IMR-90 (cell line): ENCODE measurements at regions of chr2 and their contacts with region 1.

Region 1: GRCh38 chr2:241257417-241258032 is 57.9 kb downstream of the HDLBP start:
- DNase-seq: no peak
- ATAC-seq: no peak
- H3K4me3 ChIP-seq: no peak overlapping the region
- H3K27ac ChIP-seq: no peak overlapping the region
- H3K4me1 ChIP-seq: no peaks in the 10 kb centered on the region
- H3K27me3 ChIP-seq: no peaks in the 10 kb centered on the region
- CTCF ChIP-seq: peak; percentile 24; the same call in 1 of the 2 replicates
- POLR2A ChIP-seq: no peak
- RAD21 ChIP-seq: no peak

Region 2: DNA sequence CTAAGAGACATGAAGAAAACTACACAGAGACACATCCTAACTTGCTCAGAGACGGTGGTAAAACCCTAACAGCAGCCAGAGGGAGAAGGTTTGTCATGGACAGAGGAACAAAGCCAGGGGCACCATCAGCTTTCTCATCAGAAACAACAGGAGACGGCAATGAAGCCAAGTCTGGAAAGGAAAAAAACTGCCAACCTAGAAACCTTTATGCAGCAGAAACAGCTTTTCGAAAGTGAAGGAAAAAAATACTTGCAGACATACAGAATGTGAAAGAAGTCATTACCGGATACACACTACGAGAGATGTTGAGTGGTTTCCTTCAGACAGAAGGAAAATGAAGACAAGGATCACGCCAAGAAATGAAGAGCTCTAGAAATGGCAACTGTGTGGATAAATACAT is 13.2 kb before region 1 on chr2:
- CTCF ChIA-PET with region 1: no interaction called
- POLR2A ChIA-PET with region 1: no interaction called
- dilution Hi-C with region 1: no loop called
- in situ Hi-C with region 1: no loop called
- intact Hi-C with region 1: loop called (anchors 2 kb)
- DNase-seq: no peak
- ATAC-seq: no peak
- H3K4me3 ChIP-seq: no peak overlapping the region
- H3K27ac ChIP-seq: no peak overlapping the region
- H3K4me1 ChIP-seq: peaks cover 1% of the 10 kb centered on the region; the same call in 1 of the 2 replicates
- H3K27me3 ChIP-seq: no peaks in the 10 kb centered on the region
- CTCF ChIP-seq: no peak
- POLR2A ChIP-seq: no peak
- RAD21 ChIP-seq: no peak

Region 3: DNA sequence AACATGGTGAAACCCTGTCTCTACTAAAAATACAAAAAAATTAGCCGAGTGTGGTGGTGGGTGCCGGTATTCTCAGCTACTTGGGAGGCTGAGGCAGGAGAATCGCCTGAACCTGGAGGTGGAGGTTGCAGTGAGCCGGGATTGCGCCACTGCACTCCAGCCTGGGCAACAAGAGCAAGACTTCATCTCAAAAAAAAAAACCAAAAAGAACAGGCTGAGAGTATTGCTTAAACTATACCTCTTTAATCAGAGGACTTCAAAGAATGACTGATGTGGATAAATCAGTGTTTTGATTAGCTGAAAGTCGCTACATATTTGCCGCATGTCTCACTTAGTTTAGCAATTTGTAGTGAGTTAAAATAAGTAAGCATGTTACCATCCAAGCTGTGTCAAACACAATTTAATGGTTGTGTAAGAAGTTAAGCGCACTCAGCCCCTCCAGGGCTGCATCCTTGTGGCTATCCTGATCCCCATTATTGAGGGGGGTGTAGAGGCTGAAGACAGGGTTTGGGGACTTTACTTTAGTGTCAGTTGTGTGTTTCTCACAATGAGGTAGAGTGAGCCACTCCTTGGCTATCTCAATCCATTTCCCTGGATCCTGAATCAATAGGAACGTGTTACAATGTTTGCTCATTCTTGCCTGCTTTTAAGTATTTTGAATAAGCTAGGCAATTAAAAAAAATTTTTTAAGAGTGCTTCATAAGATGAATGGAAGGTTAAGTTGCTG is 87.6 kb after region 1 on chr2:
- CTCF ChIA-PET with region 1: no interaction called
- POLR2A ChIA-PET with region 1: no interaction called
- dilution Hi-C with region 1: no loop called
- in situ Hi-C with region 1: loop called (anchors 5 kb)
- intact Hi-C with region 1: loop called (anchors 5 kb)
- DNase-seq: peak; percentile 51
- ATAC-seq: peak; percentile 61
- H3K4me3 ChIP-seq: no peak overlapping the region
- H3K27ac ChIP-seq: no peak overlapping the region
- H3K4me1 ChIP-seq: peaks cover 7% of the 10 kb centered on the region
- H3K27me3 ChIP-seq: no peaks in the 10 kb centered on the region
- CTCF ChIP-seq: no peak
- POLR2A ChIP-seq: no peak
- RAD21 ChIP-seq: no peak